H1 (cell line): ENCODE measurements at regions of chr6 and their contacts with region 1.

Region 1: GRCh38 chr6:35342258-35343091 is at the start of gene PPARD:
- DNase-seq: peak; percentile 82 to 100
- H3K4me3 ChIP-seq: peak within 1 kb of the TSS; percentile 38 to 77 (median 62)
- H3K27ac ChIP-seq: no peak within 1 kb of the TSS
- H3K4me1 ChIP-seq: peaks cover 0 to 7% (median 1%) of the 10 kb centered on the region in 4 experiments; a peak in 3 of 7 replicates
- H3K27me3 ChIP-seq: no peaks in the 10 kb centered on the region
- CTCF ChIP-seq: peak; percentile 95 to 98 (median 95)
- EP300 ChIP-seq: no peak
- POLR2A ChIP-seq: 0 out of 3 replicates have a peak, but pooled peaks of 1 of the 2 experiments have one; percentile 21
- RAD21 ChIP-seq: peak; percentile 99 to 100
- total RNA-seq, gene PPARD: 14.9 and 16.9 TPM in 2 replicates

Region 2: DNA sequence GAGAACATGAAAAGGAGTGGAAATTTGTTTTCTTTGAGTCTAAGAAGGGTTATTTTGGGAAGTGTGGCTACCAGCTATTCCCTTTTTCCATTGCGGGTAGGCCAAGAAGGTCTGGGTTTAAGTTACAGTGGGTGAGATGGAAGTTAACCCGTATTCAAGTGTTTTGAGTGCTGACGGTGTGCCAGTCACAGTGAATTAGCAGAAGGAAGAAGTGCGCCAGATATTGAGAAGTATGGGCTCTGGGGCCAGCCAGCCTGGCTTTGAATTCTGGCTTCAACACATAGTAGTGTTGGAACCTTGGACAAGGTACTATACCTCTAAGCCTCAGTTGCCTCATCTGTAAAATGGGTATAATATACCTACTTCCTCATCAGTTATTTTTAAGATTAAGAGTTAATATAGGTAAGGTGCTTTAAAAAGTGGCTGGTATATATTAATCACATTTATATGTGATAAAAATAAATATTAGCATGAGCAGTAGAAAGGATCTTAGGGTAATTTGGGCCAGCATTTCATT is 66.7 kb before region 1 on chr6:
- CTCF ChIA-PET with region 1: no interaction called
- POLR2A ChIA-PET with region 1: no interaction called
- DNase-seq: no peak
- H3K4me3 ChIP-seq: no peak overlapping the region
- H3K27ac ChIP-seq: no peak overlapping the region
- H3K4me1 ChIP-seq: no peaks in the 10 kb centered on the region
- H3K27me3 ChIP-seq: no peaks in the 10 kb centered on the region; a peak in 1 of 7 replicates
- CTCF ChIP-seq: no peak
- EP300 ChIP-seq: no peak
- POLR2A ChIP-seq: no peak
- RAD21 ChIP-seq: no peak

Region 3: DNA sequence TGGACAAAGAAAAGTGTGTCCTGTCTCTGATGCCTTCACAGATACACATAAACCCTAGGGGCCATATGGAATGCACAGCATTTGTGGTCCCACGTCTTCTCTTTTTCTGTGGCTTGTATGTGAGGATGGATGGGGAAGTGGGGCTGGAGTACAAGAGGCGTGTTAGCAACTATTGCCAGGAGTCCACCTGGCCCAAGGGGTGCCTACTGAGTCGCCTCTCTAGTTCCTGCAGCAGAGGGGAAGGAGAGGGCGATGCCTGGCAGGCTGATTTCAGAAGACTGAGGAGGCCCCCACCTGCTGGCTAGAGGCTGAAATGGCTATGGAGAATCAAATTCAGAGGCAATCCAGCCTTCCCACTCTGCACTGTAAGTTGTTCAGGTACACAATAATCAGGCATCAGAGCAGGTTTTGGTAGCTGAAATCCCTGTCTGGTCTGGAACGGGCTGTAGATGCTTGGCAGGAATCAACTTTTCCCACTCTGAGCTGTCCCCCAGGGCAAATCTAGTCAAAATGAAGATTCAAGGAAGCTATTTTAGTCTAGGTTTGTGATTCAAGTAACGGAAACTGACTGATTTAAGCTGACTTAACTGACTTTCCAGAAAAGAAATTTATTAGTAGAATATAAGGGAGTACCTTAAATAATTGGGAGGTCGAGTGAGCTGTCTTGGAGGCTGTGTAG is 15.0 kb before region 1 on chr6:
- CTCF ChIA-PET with region 1: interaction called, 33 read pairs
- POLR2A ChIA-PET with region 1: no interaction called
- DNase-seq: peak in 1 of 2 experiments; percentile 79
- H3K4me3 ChIP-seq: no peak overlapping the region
- H3K27ac ChIP-seq: no peak overlapping the region
- H3K4me1 ChIP-seq: 0 out of 7 replicates have a peak, but pooled peaks cover 0 to under 1% (median 0%) of the 10 kb centered on the region in 4 experiments
- H3K27me3 ChIP-seq: no peaks in the 10 kb centered on the region
- CTCF ChIP-seq: peak; percentile 51 to 84 (median 74)
- EP300 ChIP-seq: no peak
- POLR2A ChIP-seq: no peak
- RAD21 ChIP-seq: peak; percentile 62 to 76

Region 4: DNA sequence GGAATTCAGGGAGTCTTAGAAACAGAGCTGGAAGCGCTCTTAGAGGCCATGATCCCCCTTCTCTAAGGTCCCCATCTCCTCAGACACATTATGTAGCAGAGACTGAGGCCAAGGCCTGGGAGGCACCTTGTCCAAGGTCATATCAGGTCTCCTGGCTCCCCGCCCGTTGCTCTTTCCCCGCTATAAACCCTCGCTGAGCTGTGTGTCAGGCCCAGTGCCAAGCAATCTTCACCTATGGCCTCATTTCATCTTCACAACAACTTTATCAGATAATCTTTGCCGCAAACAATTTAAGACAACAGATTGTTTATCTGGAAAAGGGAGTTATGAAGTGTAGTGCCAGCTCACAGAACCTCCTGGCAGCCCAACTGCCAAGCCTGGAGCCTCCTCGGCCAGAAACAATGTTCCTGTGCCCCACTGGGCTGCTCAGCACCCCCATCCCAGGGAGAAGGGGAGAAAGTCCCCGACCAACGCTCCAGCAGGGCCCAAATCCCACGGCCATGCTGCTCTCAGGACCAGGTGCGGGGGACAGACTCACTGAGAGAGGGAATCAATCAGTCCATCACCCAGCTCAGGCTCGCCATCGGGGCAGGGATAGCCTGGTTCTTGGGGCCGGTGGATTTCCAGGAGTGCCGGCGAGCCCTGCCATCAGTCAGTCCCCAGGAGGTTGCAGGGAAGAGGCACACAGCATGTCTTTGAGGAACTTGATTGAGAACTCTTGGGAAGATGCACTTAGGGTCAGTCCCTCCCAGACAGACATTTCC is 92.8 kb after region 1 on chr6:
- CTCF ChIA-PET with region 1: interaction called, 21 read pairs
- POLR2A ChIA-PET with region 1: no interaction called
- DNase-seq: no peak
- H3K4me3 ChIP-seq: no peak overlapping the region
- H3K27ac ChIP-seq: no peak overlapping the region
- H3K4me1 ChIP-seq: peaks cover 0 to 2% (median 0%) of the 10 kb centered on the region in 4 experiments; a peak in 1 of 7 replicates
- H3K27me3 ChIP-seq: no peaks in the 10 kb centered on the region
- CTCF ChIP-seq: no peak
- EP300 ChIP-seq: no peak
- POLR2A ChIP-seq: no peak
- RAD21 ChIP-seq: no peak

Region 5: GRCh38 chr6:35443341-35444030 is 101.0 kb after region 1 on chr6:
- CTCF ChIA-PET with region 1: interaction called, 140 read pairs
- POLR2A ChIA-PET with region 1: no interaction called
- DNase-seq: no peak
- H3K4me3 ChIP-seq: no peak overlapping the region
- H3K27ac ChIP-seq: no peak overlapping the region
- H3K4me1 ChIP-seq: no peaks in the 10 kb centered on the region
- H3K27me3 ChIP-seq: no peaks in the 10 kb centered on the region
- CTCF ChIP-seq: no peak
- EP300 ChIP-seq: no peak
- POLR2A ChIP-seq: no peak
- RAD21 ChIP-seq: no peak

Region 6: GRCh38 chr6:35634316-35634715 is 291.8 kb after region 1 on chr6:
- CTCF ChIA-PET with region 1: no interaction called
- POLR2A ChIA-PET with region 1: no interaction called
- DNase-seq: no peak
- H3K4me3 ChIP-seq: no peak overlapping the region
- H3K27ac ChIP-seq: no peak overlapping the region
- H3K4me1 ChIP-seq: no peaks in the 10 kb centered on the region
- H3K27me3 ChIP-seq: no peaks in the 10 kb centered on the region
- CTCF ChIP-seq: no peak
- EP300 ChIP-seq: no peak
- POLR2A ChIP-seq: no peak
- RAD21 ChIP-seq: no peak